ENCODE measurements at regions of chr10 and their contacts with region 1.

Region 1: DNA sequence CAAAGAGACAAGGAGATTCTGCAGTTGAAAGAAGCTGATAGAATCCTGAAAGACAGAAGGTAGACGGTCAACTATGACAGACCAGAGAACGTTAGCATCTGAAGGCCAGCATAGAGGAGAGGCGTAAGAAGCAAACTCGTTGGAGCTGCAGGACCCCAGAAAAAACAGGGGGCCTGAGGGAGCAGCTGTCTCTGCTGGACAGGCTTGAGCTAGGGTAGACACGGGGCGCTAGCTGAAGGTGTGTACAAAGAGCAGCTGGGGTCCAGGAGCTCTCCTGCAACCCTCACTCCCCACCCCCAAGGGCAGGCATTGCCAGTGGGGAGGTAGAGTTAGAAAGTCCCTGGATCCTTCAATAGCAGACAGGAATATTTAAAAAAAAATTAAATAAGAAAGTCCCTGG is 14.6 kb upstream of the GDI2 start:
- DNase-seq: no peak
- H3K4me3 ChIP-seq: no peak overlapping the region
- H3K27ac ChIP-seq: no peak overlapping the region
- H3K4me1 ChIP-seq: no peaks in the 10 kb centered on the region
- H3K27me3 ChIP-seq: no peaks in the 10 kb centered on the region
- CTCF ChIP-seq: no peak
- POLR2A ChIP-seq: no peak

Region 2: GRCh38 chr10:5862360-5862961 is 34.6 kb after region 1 on chr10:
- intact Hi-C with region 1: loop called (anchors 2 kb)
- DNase-seq: no peak
- H3K4me3 ChIP-seq: no peak overlapping the region
- H3K27ac ChIP-seq: no peak overlapping the region
- H3K4me1 ChIP-seq: no peaks in the 10 kb centered on the region
- H3K27me3 ChIP-seq: no peaks in the 10 kb centered on the region
- CTCF ChIP-seq: no peak
- POLR2A ChIP-seq: no peak